GM12878 (cell line): ENCODE measurements at regions of chr22 and their contacts with region 1.

Region 1: DNA sequence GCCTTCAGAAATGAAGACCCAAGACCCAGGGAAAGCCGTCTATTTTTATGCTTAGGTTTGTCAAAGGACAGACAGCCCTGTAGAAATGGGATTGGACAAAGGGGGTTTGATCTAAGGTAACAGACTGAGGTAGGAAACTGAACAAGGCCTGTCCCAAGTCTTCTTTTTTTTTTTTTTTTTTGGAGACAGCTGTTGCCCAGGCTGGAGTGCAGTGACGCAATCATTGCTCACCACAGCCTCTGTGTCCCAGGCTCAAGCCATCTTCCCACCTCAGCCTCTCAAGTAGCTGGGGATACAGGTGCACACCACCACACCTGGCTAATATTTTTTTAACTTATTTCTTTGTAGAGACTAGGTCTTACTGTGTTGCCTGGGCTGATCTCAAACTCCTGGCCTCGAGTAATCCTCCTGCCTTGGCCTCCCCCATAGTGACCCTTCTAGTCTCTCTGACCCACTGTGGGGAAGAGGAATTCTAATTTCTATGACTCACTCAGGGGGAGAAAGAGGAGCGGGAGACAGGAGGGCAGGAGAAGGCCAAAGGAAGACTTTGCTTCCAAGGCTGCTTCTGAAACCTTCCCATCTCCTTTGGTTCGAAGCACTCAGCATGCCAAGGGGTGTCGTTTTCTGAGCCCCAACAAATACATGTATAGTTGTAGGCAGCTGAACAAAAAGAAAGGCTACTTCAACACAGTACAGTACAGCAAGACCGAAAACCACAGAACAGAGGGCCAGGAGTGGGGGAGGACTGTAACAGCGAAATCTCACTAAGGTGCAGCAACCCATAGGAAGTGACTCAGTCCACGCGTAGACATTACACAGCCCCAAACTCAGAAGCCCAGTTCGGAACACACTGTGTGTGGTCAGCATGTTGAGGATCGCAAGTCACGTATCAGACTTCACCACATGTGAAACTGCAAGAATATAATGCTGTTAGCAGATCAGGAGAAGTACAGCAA is 872 bp downstream of the TMA7B start:
- DNase-seq: peak; percentile 96
- ATAC-seq: peak; percentile 94
- H3K4me3 ChIP-seq: peak overlapping the region; percentile 33; the same call in 1 of the 2 replicates
- H3K27ac ChIP-seq: peak overlapping the region; percentile 17
- H3K4me1 ChIP-seq: peaks cover 49% of the 10 kb centered on the region
- H3K27me3 ChIP-seq: no peaks in the 10 kb centered on the region
- CTCF ChIP-seq: no peak
- EP300 ChIP-seq: peak; percentile 65 to 86; a peak in 2 of 4 replicates
- POLR2A ChIP-seq: peak; percentile 37; the same call in 1 of the 2 replicates
- RAD21 ChIP-seq: no peak

Region 2: DNA sequence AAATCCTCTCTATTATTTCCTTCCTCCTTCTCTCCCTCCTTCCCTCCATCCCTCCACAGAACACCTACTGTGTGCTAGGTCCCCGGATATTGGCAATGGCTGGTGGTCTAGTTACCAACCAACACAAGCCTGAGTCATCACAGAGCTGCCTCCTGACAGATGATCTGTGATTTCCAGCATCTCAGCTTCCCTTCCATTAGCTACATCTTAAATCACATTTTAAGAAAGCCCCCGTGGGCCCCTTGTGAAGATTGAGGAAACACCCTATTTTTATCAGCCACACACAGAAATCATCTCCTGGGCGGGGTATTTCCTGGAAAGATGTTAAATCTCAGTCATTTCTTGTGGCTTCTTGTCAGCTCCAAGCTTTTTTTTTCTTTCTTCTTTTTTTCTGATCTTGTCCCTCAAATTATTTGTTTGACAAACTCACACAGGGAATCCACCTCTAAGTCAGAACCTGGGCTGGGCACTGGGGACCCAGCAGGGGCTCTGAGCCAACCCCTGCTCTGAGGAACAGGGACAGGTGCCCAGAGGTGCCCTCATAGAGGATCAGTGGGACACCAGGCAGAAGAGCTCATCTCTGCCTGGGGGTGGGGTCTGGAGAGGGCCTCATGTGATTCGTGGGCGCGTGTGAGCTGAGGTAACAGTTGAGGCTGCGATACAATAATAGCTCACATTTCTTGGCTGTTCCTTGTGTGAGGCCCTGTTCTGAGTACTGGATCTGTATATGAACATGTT is 348.1 kb before region 1 on chr22:
- CTCF ChIA-PET with region 1: no interaction called
- POLR2A ChIA-PET with region 1: no interaction called
- RAD21 ChIA-PET with region 1: no interaction called
- SMC1A ChIA-PET with region 1: no interaction called
- in situ Hi-C with region 1: no loop called
- intact Hi-C with region 1: no loop called
- DNase-seq: no peak
- ATAC-seq: no peak
- H3K4me3 ChIP-seq: no peak overlapping the region
- H3K27ac ChIP-seq: no peak overlapping the region
- H3K4me1 ChIP-seq: no peaks in the 10 kb centered on the region; the same call in 1 of the 2 replicates
- H3K27me3 ChIP-seq: peaks cover 3 to 4% of the 10 kb centered on the region in 2 experiments
- CTCF ChIP-seq: no peak
- EP300 ChIP-seq: no peak
- POLR2A ChIP-seq: no peak
- RAD21 ChIP-seq: no peak

Region 3: GRCh38 chr22:39917776-39918495 is 43.1 kb before region 1 on chr22:
- CTCF ChIA-PET with region 1: no interaction called
- POLR2A ChIA-PET with region 1: no interaction called
- RAD21 ChIA-PET with region 1: interaction called, 4 read pairs
- SMC1A ChIA-PET with region 1: interaction called, 4 read pairs
- in situ Hi-C with region 1: no loop called
- intact Hi-C with region 1: loop called (anchors 5 kb)
- DNase-seq: no peak
- ATAC-seq: no peak
- H3K4me3 ChIP-seq: no peak overlapping the region
- H3K27ac ChIP-seq: no peak overlapping the region
- H3K4me1 ChIP-seq: peaks cover 9% of the 10 kb centered on the region; the same call in 1 of the 2 replicates
- H3K27me3 ChIP-seq: no peaks in the 10 kb centered on the region
- CTCF ChIP-seq: no peak
- EP300 ChIP-seq: no peak
- POLR2A ChIP-seq: no peak
- RAD21 ChIP-seq: no peak

Region 4: DNA sequence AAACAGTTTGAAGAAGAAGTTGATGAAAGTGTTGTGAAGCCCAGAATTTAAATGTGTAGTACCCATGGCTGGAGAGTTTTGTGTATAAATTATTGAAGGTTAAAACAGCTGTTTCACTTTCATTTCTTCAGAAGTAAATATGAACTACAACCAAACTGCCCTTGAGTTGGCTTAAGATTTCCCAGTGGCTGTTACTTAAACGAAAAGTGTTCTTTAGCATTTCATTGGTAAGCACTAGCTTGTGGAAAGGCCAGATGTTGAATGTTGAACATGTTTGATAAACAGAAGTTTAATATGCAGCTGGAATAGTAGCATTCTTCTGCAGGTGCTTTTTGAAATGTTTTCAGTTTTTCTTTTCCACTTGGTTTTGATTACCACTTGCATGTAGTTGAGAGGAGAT is 133.4 kb after region 1 on chr22:
- CTCF ChIA-PET with region 1: no interaction called
- POLR2A ChIA-PET with region 1: no interaction called
- RAD21 ChIA-PET with region 1: no interaction called
- SMC1A ChIA-PET with region 1: no interaction called
- in situ Hi-C with region 1: no loop called
- intact Hi-C with region 1: no loop called
- DNase-seq: peak; percentile 15
- ATAC-seq: peak; percentile 67
- H3K4me3 ChIP-seq: peak overlapping the region; percentile 49; the same call in 1 of the 2 replicates
- H3K27ac ChIP-seq: peak overlapping the region; percentile 30; the same call in 1 of the 2 replicates
- H3K4me1 ChIP-seq: no peaks in the 10 kb centered on the region; the same call in 1 of the 2 replicates
- H3K27me3 ChIP-seq: no peaks in the 10 kb centered on the region
- CTCF ChIP-seq: no peak
- EP300 ChIP-seq: no peak
- POLR2A ChIP-seq: no peak
- RAD21 ChIP-seq: no peak